Prostate gland (tissue), 2 donors: ENCODE measurements at regions of chr4 and their contacts with region 1.

Region 1: DNA sequence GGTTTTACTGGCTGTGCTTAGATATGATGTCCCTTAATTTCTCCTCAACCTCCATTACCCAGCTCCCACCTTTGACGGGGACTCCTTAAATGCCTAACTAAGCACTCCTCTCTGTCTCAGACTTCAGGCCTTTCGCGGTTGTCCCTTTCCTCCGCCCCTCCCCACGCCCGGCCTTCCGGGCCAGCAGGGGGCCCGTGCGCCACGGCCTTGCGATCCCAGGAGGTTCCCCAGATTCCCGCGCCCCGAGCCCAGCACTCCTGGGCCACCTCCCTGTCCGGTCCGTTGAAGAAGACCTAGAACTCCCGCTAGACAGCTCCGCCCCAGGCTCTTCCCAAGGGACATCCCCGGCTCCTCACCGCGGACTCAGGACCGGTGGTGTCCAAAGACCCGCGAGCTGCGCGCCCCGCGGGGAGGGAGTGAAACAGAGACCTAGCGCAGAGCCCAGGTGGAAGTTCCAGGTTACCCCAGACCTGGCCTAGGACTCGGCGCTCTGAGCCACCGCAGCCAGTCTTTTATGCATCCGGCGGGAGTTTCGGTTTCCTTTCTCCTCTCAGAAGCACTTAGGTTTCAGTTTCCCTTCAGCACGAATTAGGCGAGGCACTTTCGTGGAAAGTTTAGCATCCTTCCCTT is at the start of gene DDX60:
- DNase-seq: peak; percentile 83
- H3K4me3 ChIP-seq: peak within 1 kb of the TSS; percentile 56 to 84
- H3K27ac ChIP-seq: peak within 1 kb of the TSS; percentile 96 to 99
- H3K4me1 ChIP-seq: no peaks in the 10 kb centered on the region
- H3K27me3 ChIP-seq: no peaks in the 10 kb centered on the region
- CTCF ChIP-seq: peak in 3 of 4 experiments; percentile 21 to 53 (median 38)
- POLR2A ChIP-seq: no peak
- total RNA-seq, gene DDX60: 9.1 to 19.2 TPM

Region 2: DNA sequence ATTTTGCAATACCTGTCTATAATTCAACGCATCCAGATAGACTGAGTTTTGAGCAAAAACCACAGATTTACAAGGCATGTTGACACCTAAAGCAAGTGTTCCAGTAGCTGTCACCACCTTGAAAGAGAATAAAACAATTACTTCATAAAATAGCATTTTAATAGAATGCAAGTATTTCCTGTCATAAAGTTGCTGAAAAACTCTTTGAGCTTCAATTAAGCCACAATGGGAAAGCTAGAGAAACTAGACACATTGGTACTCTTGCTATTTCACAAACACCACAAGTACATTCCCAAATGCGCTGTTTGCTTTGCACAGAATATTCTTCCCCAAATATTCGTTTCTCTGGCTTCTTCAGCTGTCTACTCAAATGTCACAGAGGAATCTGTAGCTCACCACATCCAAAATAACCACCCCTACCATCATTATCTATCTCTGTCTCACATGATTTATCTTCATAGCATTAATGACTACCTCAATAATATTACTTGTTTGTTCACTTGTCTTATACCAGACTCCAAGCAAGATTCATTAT is 70.1 kb before region 1 on chr4:
- intact Hi-C with region 1: no loop called
- DNase-seq: no peak
- H3K4me3 ChIP-seq: no peak overlapping the region
- H3K27ac ChIP-seq: no peak overlapping the region
- H3K4me1 ChIP-seq: no peaks in the 10 kb centered on the region
- H3K27me3 ChIP-seq: no peaks in the 10 kb centered on the region
- CTCF ChIP-seq: no peak
- POLR2A ChIP-seq: no peak

Region 3: DNA sequence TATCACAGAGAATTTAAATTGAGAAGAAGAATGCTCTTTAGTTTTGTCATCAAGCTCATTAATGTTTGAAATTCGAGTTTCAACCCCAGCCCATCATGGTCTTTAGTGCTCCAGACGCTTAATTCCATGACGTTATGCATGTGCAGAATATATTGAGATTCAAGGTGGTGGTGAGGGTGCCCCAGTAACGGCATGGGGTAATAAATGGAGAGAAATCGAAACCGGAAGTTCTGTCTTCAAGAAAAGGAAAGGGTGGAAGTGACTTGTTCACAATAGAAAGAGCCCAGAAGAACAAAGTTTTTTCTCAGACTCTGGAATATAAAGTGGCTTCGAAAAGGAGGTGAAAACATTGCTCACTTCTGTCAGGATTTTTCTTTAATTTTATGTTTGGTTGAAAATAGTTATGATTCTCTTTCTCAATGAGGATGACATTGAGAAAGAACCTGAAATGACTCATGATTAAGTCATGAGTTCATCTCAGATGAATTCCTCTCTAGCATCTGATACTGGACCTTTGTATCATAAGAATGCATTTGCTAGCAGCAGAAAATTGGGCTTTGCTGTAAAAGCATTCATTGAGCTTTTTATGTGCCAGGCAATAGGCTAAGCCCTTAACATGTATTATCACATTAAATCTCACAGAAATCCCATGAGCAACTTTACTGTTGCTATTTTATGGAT is 162.7 kb after region 1 on chr4:
- intact Hi-C with region 1: loop called (anchors 2 kb)
- DNase-seq: peak; percentile 20
- H3K4me3 ChIP-seq: peak overlapping the region; percentile 54 to 70
- H3K27ac ChIP-seq: peak overlapping the region; percentile 92 to 93
- H3K4me1 ChIP-seq: no peaks in the 10 kb centered on the region
- H3K27me3 ChIP-seq: no peaks in the 10 kb centered on the region
- CTCF ChIP-seq: no peak
- POLR2A ChIP-seq: no peak